WTC11 (cell line): ENCODE measurements at regions of chr14 and their contacts with region 1.

Region 1: GRCh38 chr14:75487155-75487671 is 35.1 kb upstream of the BATF start:
- DNase-seq: no peak
- ATAC-seq: no peak
- H3K4me3 Mint-ChIP-seq: no peak overlapping the region
- H3K27ac Mint-ChIP-seq: no peak overlapping the region
- H3K4me1 Mint-ChIP-seq: no peaks in the 10 kb centered on the region
- H3K27me3 Mint-ChIP-seq: no peaks in the 10 kb centered on the region; the same call in 1 of the 2 replicates
- CTCF ChIP-seq: no peak

Region 2: GRCh38 chr14:75286313-75286712 is 200.9 kb before region 1 on chr14:
- CTCF ChIA-PET with region 1: no interaction called
- POLR2A ChIA-PET with region 1: no interaction called
- DNase-seq: no peak
- ATAC-seq: peak; percentile 17; the same call in 1 of the 2 replicates
- H3K4me3 Mint-ChIP-seq: no peak overlapping the region
- H3K27ac Mint-ChIP-seq: peak overlapping the region; percentile 10; the same call in 1 of the 2 replicates
- H3K4me1 Mint-ChIP-seq: peaks cover 35% of the 10 kb centered on the region
- H3K27me3 Mint-ChIP-seq: no peaks in the 10 kb centered on the region
- CTCF ChIP-seq: no peak

Region 3: GRCh38 chr14:75307700-75308379 is 179.4 kb before region 1 on chr14:
- CTCF ChIA-PET with region 1: interaction called, 92 read pairs
- POLR2A ChIA-PET with region 1: no interaction called
- DNase-seq: peak; percentile 94
- ATAC-seq: peak; percentile 74
- H3K4me3 Mint-ChIP-seq: no peak overlapping the region
- H3K27ac Mint-ChIP-seq: no peak overlapping the region
- H3K4me1 Mint-ChIP-seq: peaks cover 16% of the 10 kb centered on the region
- H3K27me3 Mint-ChIP-seq: no peaks in the 10 kb centered on the region
- CTCF ChIP-seq: peak; percentile 66

Region 4: DNA sequence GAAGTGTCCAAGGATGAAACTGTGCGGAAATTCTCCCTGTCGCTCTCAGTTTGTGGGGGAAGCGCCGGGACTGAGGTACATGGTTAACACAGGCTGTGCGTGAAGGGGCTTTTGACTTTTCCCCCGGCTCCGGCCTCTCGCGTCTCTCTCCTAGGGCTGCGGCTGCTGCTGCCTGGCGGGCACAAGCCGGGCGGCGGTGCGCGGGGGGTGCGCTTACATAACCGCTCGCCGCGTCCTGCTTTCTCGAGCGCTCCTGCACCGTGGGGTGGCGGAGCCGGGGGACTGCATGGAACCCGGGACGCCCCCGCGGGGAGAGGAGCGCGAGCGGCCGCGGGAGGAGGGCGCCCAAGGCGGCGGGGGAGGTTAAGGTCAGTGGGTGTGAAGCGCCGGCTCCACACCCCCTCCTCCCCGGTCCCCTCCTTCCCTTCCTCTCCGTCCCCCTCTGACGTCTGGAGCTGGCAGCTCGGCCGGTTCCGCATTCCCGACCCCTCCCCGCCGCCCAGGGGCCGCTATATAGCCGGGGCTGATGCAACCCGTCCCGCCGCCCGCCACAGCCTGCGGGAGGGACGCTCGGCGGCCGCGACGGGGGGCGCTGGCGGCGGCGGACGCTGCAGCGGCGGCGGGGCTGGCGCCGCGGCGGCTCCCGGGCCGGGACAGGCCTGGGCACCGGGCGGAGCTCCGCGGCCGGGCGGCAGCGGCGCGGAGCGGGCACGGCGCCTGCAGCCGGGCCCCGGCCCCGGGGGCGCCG is 59.6 kb before region 1 on chr14 and contains the start of gene JDP2:
- CTCF ChIA-PET with region 1: interaction called, 13 read pairs
- POLR2A ChIA-PET with region 1: no interaction called
- DNase-seq: peak; percentile 82
- ATAC-seq: peak; percentile 71
- H3K4me3 Mint-ChIP-seq: peak within 1 kb of the TSS; percentile 73
- H3K27ac Mint-ChIP-seq: no peak within 1 kb of the TSS
- H3K4me1 Mint-ChIP-seq: peaks cover 31% of the 10 kb centered on the region
- H3K27me3 Mint-ChIP-seq: peaks cover 29% of the 10 kb centered on the region
- CTCF ChIP-seq: no peak
- total RNA-seq, gene JDP2: 17.9 to 23.3 TPM (median 21.8 TPM) in 3 replicates

Region 5: DNA sequence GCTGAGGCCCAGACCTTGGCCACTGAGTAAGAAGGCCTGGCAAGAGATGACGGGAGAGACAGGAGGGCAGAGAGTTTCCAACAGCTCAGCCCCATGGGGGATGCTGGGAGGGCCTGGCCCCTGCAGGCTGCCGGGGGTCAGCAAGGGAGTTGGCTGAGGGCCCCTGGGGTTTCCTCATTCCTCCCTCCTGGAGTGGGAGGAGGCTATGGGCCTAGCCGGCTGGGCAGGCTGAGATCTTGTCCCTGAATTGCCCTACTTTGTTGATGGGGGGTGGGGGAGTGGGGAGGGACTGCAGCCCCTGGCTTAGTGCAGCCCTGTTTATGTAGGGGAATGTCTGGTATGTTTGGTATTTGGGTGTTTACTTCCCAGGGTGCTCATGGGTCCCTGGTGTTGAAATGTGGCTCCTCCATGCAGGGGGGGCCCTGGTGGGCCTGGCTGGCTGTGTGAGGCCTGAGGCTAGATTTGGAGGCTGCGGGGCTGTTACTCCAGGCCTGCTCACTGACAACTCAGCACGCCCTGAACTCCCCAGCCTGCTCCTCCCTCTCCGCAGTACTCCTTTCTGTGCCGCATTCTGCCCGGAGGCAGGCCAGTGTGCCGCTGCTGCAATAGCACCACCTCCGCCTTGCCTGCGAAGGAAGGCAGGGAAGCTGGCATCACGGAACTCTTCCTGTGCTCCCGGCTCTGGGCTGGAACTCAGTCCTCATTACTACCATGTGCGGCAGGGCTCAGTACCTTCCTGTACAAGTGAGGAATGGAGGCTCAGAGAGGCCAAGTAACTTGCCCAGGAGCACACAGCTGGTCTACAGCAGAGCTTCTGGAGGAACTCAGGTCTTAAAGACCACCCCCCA is 34.1 kb before region 1 on chr14:
- CTCF ChIA-PET with region 1: interaction called, 18 read pairs
- POLR2A ChIA-PET with region 1: no interaction called
- DNase-seq: peak; percentile 84
- ATAC-seq: peak; percentile 89
- H3K4me3 Mint-ChIP-seq: 0 out of 2 replicates have a peak overlapping the region, but pooled peaks have one; percentile 25
- H3K27ac Mint-ChIP-seq: peak overlapping the region; percentile 100
- H3K4me1 Mint-ChIP-seq: peaks cover 70% of the 10 kb centered on the region
- H3K27me3 Mint-ChIP-seq: no peaks in the 10 kb centered on the region
- CTCF ChIP-seq: no peak

Region 6: GRCh38 chr14:75476274-75476995 is 10.8 kb before region 1 on chr14:
- CTCF ChIA-PET with region 1: interaction called, 31 read pairs
- POLR2A ChIA-PET with region 1: no interaction called
- DNase-seq: peak; percentile 44
- ATAC-seq: peak; percentile 56
- H3K4me3 Mint-ChIP-seq: no peak overlapping the region
- H3K27ac Mint-ChIP-seq: 0 out of 2 replicates have a peak overlapping the region, but pooled peaks have one; percentile 18
- H3K4me1 Mint-ChIP-seq: peaks cover 33% of the 10 kb centered on the region
- H3K27me3 Mint-ChIP-seq: no peaks in the 10 kb centered on the region; the same call in 1 of the 2 replicates
- CTCF ChIP-seq: no peak

Region 7: GRCh38 chr14:75499084-75499875 is 12.1 kb after region 1 on chr14:
- CTCF ChIA-PET with region 1: interaction called, 12 read pairs
- POLR2A ChIA-PET with region 1: no interaction called
- DNase-seq: no peak
- ATAC-seq: no peak
- H3K4me3 Mint-ChIP-seq: no peak overlapping the region
- H3K27ac Mint-ChIP-seq: no peak overlapping the region
- H3K4me1 Mint-ChIP-seq: no peaks in the 10 kb centered on the region
- H3K27me3 Mint-ChIP-seq: no peaks in the 10 kb centered on the region
- CTCF ChIP-seq: no peak

Region 8: GRCh38 chr14:75514673-75515628 is 27.7 kb after region 1 on chr14:
- CTCF ChIA-PET with region 1: interaction called, 30 read pairs
- POLR2A ChIA-PET with region 1: no interaction called
- DNase-seq: peak; percentile 72
- ATAC-seq: peak; percentile 77
- H3K4me3 Mint-ChIP-seq: no peak overlapping the region
- H3K27ac Mint-ChIP-seq: no peak overlapping the region
- H3K4me1 Mint-ChIP-seq: peaks cover 7% of the 10 kb centered on the region
- H3K27me3 Mint-ChIP-seq: no peaks in the 10 kb centered on the region; the same call in 1 of the 2 replicates
- CTCF ChIP-seq: 0 out of 2 replicates have a peak, but pooled peaks have one; percentile 17

Region 9: DNA sequence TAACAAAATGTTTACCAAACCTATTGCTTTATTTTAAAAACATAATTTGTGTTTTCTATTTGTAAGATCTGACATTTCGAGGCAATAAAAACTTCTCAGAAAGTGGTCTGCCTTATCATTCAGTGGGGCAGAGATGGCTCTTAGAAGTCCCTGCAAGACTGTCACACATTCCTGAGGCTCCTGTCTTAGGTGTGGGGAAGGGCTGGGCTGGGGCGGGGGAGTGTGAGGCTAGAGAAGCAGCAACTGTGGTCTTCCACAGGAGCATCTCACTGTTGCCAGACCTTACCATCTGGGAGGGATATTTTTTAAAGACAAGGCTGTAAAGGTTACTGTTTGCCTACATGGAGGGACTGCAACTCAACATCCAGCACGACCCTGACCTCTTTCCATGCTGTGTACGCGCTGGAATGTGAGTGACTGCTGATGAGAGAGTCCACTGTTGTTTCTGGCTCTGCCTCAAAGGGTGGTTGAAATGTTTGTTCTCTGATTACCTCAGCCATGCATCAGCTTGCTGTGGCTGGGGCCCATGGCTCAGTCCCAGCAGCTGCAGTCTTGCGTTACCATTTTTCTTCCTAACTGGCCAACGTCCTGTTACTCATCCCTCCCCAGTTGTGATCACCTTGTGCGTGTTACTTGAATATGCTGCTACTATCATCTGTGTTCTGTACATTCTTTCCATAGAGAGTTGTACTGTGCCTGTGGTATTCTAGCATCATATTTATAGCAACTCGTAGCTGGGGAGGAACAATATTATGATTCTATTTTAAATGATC is 161.0 kb after region 1 on chr14:
- CTCF ChIA-PET with region 1: no interaction called
- POLR2A ChIA-PET with region 1: no interaction called
- DNase-seq: no peak
- ATAC-seq: no peak
- H3K4me3 Mint-ChIP-seq: no peak overlapping the region
- H3K27ac Mint-ChIP-seq: peak overlapping the region; percentile 92
- H3K4me1 Mint-ChIP-seq: no peaks in the 10 kb centered on the region
- H3K27me3 Mint-ChIP-seq: no peaks in the 10 kb centered on the region
- CTCF ChIP-seq: no peak